Posterior cingulate gyrus (tissue), 11 donors: ENCODE measurements at regions of chr1 and their contacts with region 1.

Region 1: GRCh38 chr1:216961516-216961915 is 238.3 kb upstream of the ESRRG start:
- DNase-seq: no peak

Region 2: GRCh38 chr1:216910081-216910840 is 51.3 kb before region 1 on chr1:
- intact Hi-C with region 1: no loop called
- DNase-seq: peak in 1 of 10 donors; percentile 38

Region 3: DNA sequence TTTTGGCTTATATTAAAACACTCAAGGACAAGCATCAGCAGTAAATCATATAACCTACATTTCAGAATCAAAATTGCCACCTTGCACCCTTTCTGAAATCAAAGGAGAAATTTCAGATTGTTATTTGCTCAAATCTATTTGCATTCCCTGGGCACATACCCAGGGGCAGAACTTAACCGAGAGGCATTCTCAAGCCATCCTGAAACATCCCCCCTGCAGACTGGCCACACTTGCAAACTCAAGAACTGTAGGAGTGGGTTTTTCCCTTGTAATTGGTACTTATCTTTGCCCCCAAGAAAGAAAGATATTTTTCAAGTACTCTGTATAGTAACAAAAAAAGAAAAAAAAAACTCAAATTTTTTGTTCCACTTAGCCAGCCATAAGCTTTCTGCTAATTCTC is 24.7 kb before region 1 on chr1:
- intact Hi-C with region 1: loop called (anchors 1 kb)
- DNase-seq: no peak

Region 4: DNA sequence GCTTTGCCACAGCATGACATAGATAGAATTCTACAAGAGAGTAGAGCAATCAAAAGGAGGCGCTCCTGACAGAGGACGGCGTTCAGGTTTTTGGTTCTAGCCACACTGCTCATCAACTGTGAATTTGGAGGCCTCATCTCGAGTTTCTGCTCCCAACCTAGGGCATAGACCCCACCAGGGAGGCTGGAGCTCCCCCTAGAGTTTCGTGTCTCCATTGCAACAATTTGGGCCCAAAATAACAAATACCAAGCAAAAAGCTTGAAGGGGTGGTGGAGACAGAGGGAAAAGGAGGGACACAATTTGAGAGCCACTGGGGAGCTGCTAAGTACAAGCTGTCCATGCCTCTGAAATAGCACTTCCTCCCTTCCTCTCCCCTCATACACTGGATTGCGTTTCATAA is 372.4 kb after region 1 on chr1:
- intact Hi-C with region 1: loop called (anchors 10 kb)
- DNase-seq: peak in 4 of 10 donors; percentile 8 to 40 (median 22)